Endothelial cell of umbilical vein (primary cell): ENCODE measurements at regions of chr3 and their contacts with region 1.

Region 1: GRCh38 chr3:117019082-117019713 is 309.6 kb downstream of the TUSC7 start:
- DNase-seq: peak; percentile 67
- H3K4me3 ChIP-seq: no peak overlapping the region
- H3K27ac ChIP-seq: no peak overlapping the region
- H3K4me1 ChIP-seq: no peaks in the 10 kb centered on the region
- H3K27me3 ChIP-seq: peaks cover 4 to 9% of the 10 kb centered on the region in 2 experiments
- CTCF ChIP-seq: peak; percentile 73 to 78
- POLR2A ChIP-seq: no peak

Region 2: GRCh38 chr3:117059067-117059955 is 40.1 kb after region 1 on chr3:
- CTCF ChIA-PET with region 1: interaction called, 22 read pairs
- POLR2A ChIA-PET with region 1: no interaction called
- dilution Hi-C with region 1: no loop called
- intact Hi-C with region 1: loop called (anchors 2 kb)
- DNase-seq: peak; percentile 22
- H3K4me3 ChIP-seq: no peak overlapping the region
- H3K27ac ChIP-seq: no peak overlapping the region
- H3K4me1 ChIP-seq: no peaks in the 10 kb centered on the region
- H3K27me3 ChIP-seq: peaks cover 0 to 2% of the 10 kb centered on the region in 2 experiments
- CTCF ChIP-seq: peak; percentile 25 to 30
- POLR2A ChIP-seq: no peak

Region 3: DNA sequence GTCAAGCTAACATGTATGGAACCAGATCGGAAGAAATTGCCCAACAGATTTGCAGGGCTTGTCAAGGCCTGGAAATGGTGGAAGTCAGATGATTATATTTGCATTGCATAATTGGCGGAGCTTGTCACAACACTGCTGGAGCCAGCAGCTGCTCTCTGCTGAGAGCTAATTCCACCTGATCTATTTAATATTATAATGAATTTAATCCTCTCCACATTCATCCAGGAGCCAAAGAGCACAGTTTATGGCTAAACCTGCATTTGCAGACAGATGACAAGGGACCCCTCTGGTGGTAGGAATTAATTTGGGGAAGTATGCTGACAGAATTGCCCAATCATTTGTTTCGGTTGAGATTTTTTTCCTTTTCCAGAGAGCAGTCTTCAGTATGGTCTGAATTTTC is 420.6 kb after region 1 on chr3:
- CTCF ChIA-PET with region 1: no interaction called
- POLR2A ChIA-PET with region 1: no interaction called
- dilution Hi-C with region 1: no loop called
- intact Hi-C with region 1: loop called (anchors 5 kb)
- DNase-seq: no peak
- H3K4me3 ChIP-seq: no peak overlapping the region
- H3K27ac ChIP-seq: no peak overlapping the region
- H3K4me1 ChIP-seq: no peaks in the 10 kb centered on the region
- H3K27me3 ChIP-seq: no peaks in the 10 kb centered on the region
- CTCF ChIP-seq: peak in 1 of 2 donors; percentile 11
- POLR2A ChIP-seq: no peak

Region 4: GRCh38 chr3:117898722-117899522 is 879.7 kb after region 1 on chr3:
- CTCF ChIA-PET with region 1: interaction called, 3 read pairs
- POLR2A ChIA-PET with region 1: no interaction called
- dilution Hi-C with region 1: no loop called
- intact Hi-C with region 1: loop called (anchors 10 kb)
- DNase-seq: peak; percentile 44
- H3K4me3 ChIP-seq: no peak overlapping the region
- H3K27ac ChIP-seq: no peak overlapping the region
- H3K4me1 ChIP-seq: no peaks in the 10 kb centered on the region
- H3K27me3 ChIP-seq: no peaks in the 10 kb centered on the region
- CTCF ChIP-seq: peak; percentile 40 to 56
- POLR2A ChIP-seq: no peak